PC-9 (cell line): ENCODE measurements at regions of chr6 and their contacts with region 1.

Region 1: DNA sequence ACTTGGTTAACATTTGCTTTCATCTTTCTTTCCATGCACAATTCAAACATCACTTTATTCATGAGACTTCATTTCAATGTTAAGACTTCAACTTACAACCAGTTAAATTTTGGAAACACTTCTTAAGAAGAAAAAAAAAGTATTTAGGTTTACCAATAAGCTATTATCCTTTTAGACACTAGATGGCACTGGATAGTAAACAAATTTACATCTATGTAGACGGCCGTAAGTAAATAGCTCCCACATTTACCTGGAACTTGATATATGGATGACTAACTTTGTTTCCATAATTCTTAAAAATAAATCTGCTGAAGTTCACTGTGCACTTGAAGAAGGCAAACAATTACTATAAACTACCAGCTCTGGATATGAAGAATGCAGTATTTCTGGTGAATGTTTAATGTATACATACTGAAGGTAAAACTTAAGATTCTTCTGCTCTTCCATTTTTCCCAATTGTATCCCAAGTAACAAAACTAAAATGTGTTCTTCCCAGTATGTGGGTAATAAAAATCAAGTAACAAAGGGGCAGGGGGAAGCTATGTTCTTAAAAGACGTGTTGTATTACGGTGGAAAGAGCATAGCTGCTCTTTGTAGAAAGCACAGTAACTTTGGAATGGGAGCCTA is 130.6 kb upstream of the C6orf118 start:
- DNase-seq: peak in 1 of 2 experiments; percentile 43
- H3K4me3 ChIP-seq: no peak overlapping the region
- H3K27ac ChIP-seq: no peak overlapping the region
- H3K4me1 ChIP-seq: 0 out of 2 replicates have a peak, but pooled peaks cover 4% of the 10 kb centered on the region
- H3K27me3 ChIP-seq: no peaks in the 10 kb centered on the region
- CTCF ChIP-seq: peak; percentile 74

Region 2: GRCh38 chr6:164741938-164742451 is 698.0 kb before region 1 on chr6:
- CTCF ChIA-PET with region 1: no interaction called
- POLR2A ChIA-PET with region 1: no interaction called
- intact Hi-C with region 1: no loop called
- DNase-seq: no peak
- H3K4me3 ChIP-seq: no peak overlapping the region
- H3K27ac ChIP-seq: no peak overlapping the region
- H3K4me1 ChIP-seq: no peaks in the 10 kb centered on the region
- H3K27me3 ChIP-seq: 0 out of 2 replicates have a peak, but pooled peaks cover 2% of the 10 kb centered on the region
- CTCF ChIP-seq: no peak

Region 3: GRCh38 chr6:165850434-165851019 is 410.5 kb after region 1 on chr6:
- CTCF ChIA-PET with region 1: interaction called, 5 read pairs
- POLR2A ChIA-PET with region 1: no interaction called
- intact Hi-C with region 1: loop called (anchors 1 kb)
- DNase-seq: peak in 1 of 2 experiments; percentile 17
- H3K4me3 ChIP-seq: no peak overlapping the region
- H3K27ac ChIP-seq: no peak overlapping the region
- H3K4me1 ChIP-seq: no peaks in the 10 kb centered on the region
- H3K27me3 ChIP-seq: peaks cover 72% of the 10 kb centered on the region
- CTCF ChIP-seq: peak; percentile 91